K562 (cell line): ENCODE measurements at regions of chr16 and their contacts with region 1.

Region 1: DNA sequence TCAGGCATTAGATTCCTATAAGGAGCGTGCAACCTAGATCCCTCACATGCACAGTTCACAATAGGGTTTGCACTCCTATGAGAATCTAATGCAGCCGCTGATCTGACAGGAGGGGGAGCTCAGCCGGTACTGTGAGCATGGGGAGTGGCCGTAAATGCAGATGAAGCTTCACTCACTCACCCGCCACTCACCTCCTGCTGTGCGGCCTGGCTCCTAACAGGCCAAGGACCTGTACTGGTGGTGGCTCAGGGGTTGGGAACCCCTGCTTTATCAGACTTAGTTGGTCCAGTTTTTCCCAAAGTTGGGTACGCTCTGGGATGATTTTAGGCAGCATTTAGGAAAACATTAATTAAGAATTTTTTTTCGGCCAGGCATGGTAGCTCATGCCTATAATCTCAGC is 103.8 kb downstream of the MARF1 start:
- DNase-seq: peak; percentile 61 to 89 (median 64)
- ATAC-seq: peak; percentile 99
- H3K4me3 ChIP-seq: no peak overlapping the region
- H3K27ac ChIP-seq: no peak overlapping the region
- H3K4me1 ChIP-seq: peaks cover 7 to 17% of the 10 kb centered on the region in 2 experiments; a peak in 4 of 5 replicates
- H3K27me3 ChIP-seq: no peaks in the 10 kb centered on the region
- CTCF ChIP-seq: peak; percentile 19 to 53 (median 38); a peak in 3 of 6 replicates
- EP300 ChIP-seq: no peak
- POLR2A ChIP-seq: no peak
- RAD21 ChIP-seq: peak; percentile 17 to 63; a peak in 2 of 4 replicates

Region 2: DNA sequence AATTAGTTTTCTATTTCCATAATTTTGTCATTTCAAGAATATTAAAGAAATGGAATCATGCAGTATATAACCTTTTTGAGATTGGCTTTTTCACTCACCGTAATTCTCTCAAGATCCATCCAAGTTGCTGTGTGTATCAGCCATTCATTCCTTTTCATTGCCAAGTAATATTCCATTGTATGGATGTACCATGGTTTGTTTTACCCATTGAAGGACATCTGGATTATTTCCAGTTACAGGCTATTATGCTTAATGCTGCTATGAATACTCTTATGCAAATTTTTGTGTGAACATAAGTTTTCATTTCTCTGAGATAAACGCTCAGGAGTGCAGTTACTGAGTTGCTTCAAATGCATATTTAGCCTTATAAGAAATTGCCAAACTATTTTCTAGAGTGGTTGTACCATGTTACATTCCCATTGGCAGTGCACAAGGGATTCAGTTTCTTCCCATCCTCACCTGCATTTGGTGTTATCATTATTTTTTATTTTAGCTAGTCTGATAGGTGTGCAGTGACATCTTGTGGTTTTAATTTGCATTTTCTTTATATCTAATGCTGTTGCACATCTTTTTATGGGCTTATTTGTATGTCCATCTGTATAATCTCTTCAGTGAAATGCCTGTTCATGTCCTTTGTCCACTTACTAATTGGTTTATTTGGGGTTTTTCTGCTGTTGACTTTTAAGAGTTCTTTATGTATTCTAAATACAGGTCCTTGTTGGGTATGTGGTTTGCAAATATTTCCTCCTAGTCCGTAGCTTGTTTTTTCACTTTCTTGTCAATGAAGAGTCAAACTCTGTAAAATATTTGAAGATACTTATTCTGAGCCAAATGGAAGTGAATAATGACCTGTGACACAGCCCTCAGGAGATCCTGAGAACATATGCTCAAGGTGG is 72.1 kb before region 1 on chr16:
- CTCF ChIA-PET with region 1: no interaction called
- POLR2A ChIA-PET with region 1: no interaction called
- in situ Hi-C with region 1: no loop called
- intact Hi-C with region 1: loop called (anchors 5 kb)
- DNase-seq: no peak
- ATAC-seq: no peak
- H3K4me3 ChIP-seq: no peak overlapping the region
- H3K27ac ChIP-seq: no peak overlapping the region
- H3K4me1 ChIP-seq: no peaks in the 10 kb centered on the region; a peak in 1 of 5 replicates
- H3K27me3 ChIP-seq: no peaks in the 10 kb centered on the region
- CTCF ChIP-seq: peak in 2 of 3 experiments; percentile 10 to 40; a peak in 3 of 6 replicates
- EP300 ChIP-seq: no peak
- POLR2A ChIP-seq: no peak
- RAD21 ChIP-seq: peak in 1 of 2 experiments; percentile 60; a peak in 2 of 4 replicates

Region 3: DNA sequence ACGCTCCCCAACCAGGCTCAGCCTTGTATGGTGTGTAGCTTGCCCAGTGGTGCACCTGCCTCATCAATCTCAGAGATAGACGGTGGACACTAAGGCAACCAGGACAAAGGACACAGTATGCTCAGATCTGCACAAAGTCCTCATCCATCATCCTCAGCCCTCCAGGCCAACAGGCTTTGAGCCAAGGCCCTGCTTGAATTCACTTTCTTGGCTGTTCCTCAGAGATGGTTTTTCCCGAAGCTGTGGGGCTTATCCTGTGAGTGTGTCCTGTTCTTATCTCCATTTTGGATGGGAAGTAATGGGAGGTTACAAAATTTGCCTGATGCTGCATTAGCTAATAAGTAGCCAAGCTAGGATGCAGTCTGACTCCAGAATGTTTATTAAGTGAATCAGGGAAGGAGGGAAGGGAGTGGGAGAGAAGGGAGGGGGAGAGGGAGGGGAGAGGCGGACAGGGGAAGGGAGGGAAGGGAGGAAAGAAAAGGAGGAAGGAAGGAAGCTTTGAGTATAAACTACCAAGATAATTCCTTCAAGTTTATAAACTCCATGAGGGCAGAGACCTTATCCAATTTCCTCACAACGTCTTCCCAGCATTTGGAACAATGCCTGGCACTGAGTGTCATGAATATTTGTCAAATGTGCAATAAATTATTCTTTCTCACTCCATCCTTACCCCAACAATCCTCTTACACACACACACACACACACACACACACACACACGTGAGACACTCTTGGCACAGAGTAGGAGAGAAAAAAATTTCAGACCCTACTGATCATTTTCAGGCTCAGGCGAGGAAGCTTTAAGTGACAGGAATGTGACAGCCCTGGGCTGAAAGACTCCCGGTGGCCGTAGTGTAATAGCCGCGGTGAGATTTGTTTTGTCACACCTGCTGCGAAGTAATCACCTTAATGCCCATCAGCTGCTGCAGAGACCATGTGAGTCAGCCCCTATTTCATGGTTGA is 20.5 kb before region 1 on chr16:
- CTCF ChIA-PET with region 1: no interaction called
- POLR2A ChIA-PET with region 1: interaction called, 12 read pairs
- in situ Hi-C with region 1: no loop called
- intact Hi-C with region 1: no loop called
- DNase-seq: no peak
- ATAC-seq: no peak
- H3K4me3 ChIP-seq: no peak overlapping the region
- H3K27ac ChIP-seq: no peak overlapping the region; the same call in 2 of the 3 replicates
- H3K4me1 ChIP-seq: peaks cover 44 to 57% of the 10 kb centered on the region in 2 experiments
- H3K27me3 ChIP-seq: no peaks in the 10 kb centered on the region
- CTCF ChIP-seq: no peak
- EP300 ChIP-seq: no peak
- POLR2A ChIP-seq: no peak
- RAD21 ChIP-seq: no peak

Region 4: DNA sequence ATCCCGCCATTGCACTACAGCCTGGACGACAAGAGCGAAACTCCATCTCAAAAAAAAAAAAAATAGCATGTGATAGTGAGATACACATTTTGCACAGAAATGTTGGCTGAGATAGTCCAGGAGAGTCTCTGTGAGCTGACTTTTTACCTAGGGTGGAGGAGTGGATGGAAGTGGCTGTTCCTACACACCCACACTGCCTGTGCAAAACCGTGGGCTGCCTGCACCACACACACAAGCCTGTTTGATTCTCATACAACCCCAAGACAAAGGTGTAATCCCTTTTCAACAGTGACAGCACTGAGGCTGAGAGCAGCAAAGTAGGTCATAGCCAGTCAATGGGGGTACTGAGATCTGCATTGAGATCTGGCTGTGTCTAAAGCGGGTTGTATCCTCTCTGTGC is 16.9 kb after region 1 on chr16:
- CTCF ChIA-PET with region 1: no interaction called
- POLR2A ChIA-PET with region 1: interaction called, 11 read pairs
- in situ Hi-C with region 1: no loop called
- intact Hi-C with region 1: no loop called
- DNase-seq: no peak
- ATAC-seq: peak; percentile 20; the same call in 2 of the 3 replicates
- H3K4me3 ChIP-seq: no peak overlapping the region
- H3K27ac ChIP-seq: no peak overlapping the region
- H3K4me1 ChIP-seq: peaks cover 0 to 7% of the 10 kb centered on the region in 2 experiments; a peak in 4 of 5 replicates
- H3K27me3 ChIP-seq: no peaks in the 10 kb centered on the region
- CTCF ChIP-seq: no peak
- EP300 ChIP-seq: no peak
- POLR2A ChIP-seq: no peak
- RAD21 ChIP-seq: no peak